Activated T-helper 1 cell treated with anti-CD3 and anti-CD28 coated beads, Interleukin-12 subunit alpha, Interleukin-12 subunit beta, Interleukin-2, Interleukin-4 antibody, amounts not matched to agents 30 ng/mL and 10 ng/mL and 1 ng/mL, durations not matched to agents 14 hours and 24 hours and 36 hours (primary cell): ENCODE measurements at regions of chr10 and their contacts with region 1.

Region 1: DNA sequence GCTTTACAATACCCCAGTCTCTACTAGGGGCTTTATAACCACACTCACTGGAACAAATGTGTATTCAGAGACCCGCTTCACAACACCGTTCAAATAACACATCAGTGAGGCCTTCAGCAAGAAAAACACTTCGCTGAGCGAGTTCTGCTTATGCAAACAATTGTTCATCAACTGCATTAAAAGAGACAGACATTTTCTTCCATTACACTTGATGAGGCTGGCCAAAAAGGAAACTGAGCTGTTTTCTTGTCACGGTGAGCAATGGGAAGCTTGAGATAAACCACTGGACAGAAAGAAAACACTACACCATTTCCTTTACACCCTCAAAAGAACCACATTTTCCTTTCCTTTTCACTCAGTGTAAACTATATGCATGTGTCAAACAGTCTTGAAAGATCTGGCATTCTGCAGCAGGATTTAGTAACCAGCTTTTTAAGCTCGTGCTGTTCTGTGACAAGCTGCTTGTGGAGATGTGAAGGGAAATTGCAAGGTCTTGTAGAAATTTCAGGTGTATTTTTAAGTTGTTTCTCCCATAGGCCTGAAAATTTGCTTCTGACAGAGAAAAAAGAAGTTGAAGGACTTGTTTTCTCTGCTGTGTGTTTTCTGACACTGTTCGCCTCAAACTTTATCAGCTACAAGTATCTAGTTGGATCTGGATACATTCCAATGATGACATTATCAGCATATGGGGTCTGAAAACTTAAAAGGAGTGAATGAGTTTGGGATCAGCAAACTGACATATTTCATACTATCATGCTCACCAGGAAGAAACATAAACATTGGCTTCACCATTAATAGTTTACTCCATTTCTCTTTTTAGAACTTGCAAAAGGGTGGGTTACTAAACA is 693.1 kb downstream of the PARD3 start:
- DNase-seq: peak; percentile 13
- H3K4me3 Mint-ChIP-seq: peak overlapping the region; percentile 17
- H3K27ac Mint-ChIP-seq: peak overlapping the region; percentile 86
- H3K4me1 Mint-ChIP-seq: peaks cover 27% of the 10 kb centered on the region
- H3K27me3 Mint-ChIP-seq: no peaks in the 10 kb centered on the region

Region 2: DNA sequence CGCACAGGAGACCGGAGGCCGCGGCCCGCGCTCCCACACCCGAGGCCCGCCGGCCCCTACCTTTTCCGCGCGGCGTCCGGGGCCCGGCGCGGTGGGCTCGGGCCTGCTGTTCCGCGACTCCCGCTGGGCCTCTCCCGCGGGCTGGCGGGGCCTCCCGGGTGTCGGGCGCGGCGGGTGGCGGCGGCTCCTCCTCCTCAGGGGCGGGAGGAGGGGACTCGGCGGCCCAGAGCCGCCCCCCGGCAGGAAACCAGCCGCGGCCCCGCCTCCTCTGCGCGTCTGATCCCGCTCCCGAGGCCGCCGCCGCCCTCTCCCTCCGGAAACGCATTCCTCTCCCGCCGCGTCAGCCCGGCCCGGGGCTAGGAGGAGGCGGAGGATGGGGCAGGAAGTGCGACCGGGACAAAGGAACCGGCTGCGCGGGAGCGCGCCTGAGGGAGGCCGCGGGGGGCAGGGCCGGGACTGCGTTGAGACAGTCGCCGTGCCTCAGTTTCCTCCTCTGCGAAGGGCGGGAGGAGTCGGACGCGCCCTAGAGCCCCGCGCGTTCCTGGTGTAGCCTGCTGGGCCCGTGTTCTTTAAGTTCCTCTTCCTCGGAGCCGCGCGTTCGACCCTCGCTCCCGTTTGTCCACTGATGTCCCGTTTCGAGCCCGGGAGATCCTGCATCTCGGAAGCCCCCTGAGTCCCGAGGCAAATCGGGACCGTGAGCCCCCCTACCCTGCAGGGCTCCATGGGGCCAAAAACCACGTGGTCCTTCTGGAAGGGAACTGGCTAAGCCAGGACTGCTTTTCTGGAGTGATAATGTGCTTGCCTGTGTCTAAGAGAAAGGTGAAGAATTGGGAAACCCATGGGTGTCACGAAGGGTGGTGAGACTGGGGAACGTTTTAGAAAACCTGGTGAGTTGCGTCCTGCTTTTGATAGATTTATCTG is 1163.7 kb before region 1 on chr10 and contains the start of gene ITGB1:
- intact Hi-C with region 1: loop called (anchors 5 kb)
- DNase-seq: peak; percentile 81
- H3K4me3 Mint-ChIP-seq: peak within 1 kb of the TSS; percentile 86
- H3K27ac Mint-ChIP-seq: peak within 1 kb of the TSS; percentile 93
- H3K4me1 Mint-ChIP-seq: peaks cover 35% of the 10 kb centered on the region
- H3K27me3 Mint-ChIP-seq: peaks cover 12% of the 10 kb centered on the region
- total RNA-seq, gene ITGB1: 51.4 and 61.4 TPM in 2 replicates

Region 3: GRCh38 chr10:33143160-33143728 is 978.8 kb before region 1 on chr10:
- intact Hi-C with region 1: loop called (anchors 1 kb)
- DNase-seq: peak; percentile 31
- H3K4me3 Mint-ChIP-seq: no peak overlapping the region
- H3K27ac Mint-ChIP-seq: peak overlapping the region; percentile 70
- H3K4me1 Mint-ChIP-seq: peaks cover 49% of the 10 kb centered on the region
- H3K27me3 Mint-ChIP-seq: no peaks in the 10 kb centered on the region

Region 4: GRCh38 chr10:33330543-33331378 is 791.2 kb before region 1 on chr10:
- intact Hi-C with region 1: loop called (anchors 5 kb)
- DNase-seq: peak; percentile 53
- H3K4me3 Mint-ChIP-seq: no peak overlapping the region
- H3K27ac Mint-ChIP-seq: no peak overlapping the region
- H3K4me1 Mint-ChIP-seq: peaks cover 22% of the 10 kb centered on the region
- H3K27me3 Mint-ChIP-seq: peaks cover 55% of the 10 kb centered on the region

Region 5: GRCh38 chr10:33706746-33707145 is 415.3 kb before region 1 on chr10:
- intact Hi-C with region 1: no loop called
- DNase-seq: no peak
- H3K4me3 Mint-ChIP-seq: no peak overlapping the region
- H3K27ac Mint-ChIP-seq: no peak overlapping the region
- H3K4me1 Mint-ChIP-seq: no peaks in the 10 kb centered on the region
- H3K27me3 Mint-ChIP-seq: peaks cover 5% of the 10 kb centered on the region

Region 6: DNA sequence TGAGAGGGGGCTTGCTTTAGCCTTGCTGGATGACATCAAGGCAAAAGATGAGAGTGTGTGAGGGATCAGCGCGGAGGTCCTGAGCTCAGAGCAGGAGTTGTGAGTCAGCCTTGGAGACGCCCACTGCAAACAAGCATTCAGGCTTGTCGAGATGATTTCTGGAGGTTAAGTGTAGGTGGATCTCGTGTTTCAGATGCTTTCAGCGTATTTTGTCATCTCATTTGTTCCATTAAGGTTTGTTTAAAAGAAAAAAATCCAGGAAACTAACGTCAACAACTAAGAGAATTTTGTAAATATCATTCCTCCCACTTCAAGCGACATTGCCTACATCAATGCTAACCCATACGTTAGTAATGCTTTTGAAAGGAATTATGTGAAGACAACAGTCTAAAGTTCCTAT is 72.1 kb before region 1 on chr10:
- intact Hi-C with region 1: loop called (anchors 1 kb)
- DNase-seq: no peak
- H3K4me3 Mint-ChIP-seq: no peak overlapping the region
- H3K27ac Mint-ChIP-seq: peak overlapping the region; percentile 40
- H3K4me1 Mint-ChIP-seq: peaks cover 26% of the 10 kb centered on the region
- H3K27me3 Mint-ChIP-seq: no peaks in the 10 kb centered on the region

Region 7: GRCh38 chr10:34092891-34093290 is 29.1 kb before region 1 on chr10:
- intact Hi-C with region 1: no loop called
- DNase-seq: no peak
- H3K4me3 Mint-ChIP-seq: no peak overlapping the region
- H3K27ac Mint-ChIP-seq: no peak overlapping the region
- H3K4me1 Mint-ChIP-seq: no peaks in the 10 kb centered on the region
- H3K27me3 Mint-ChIP-seq: no peaks in the 10 kb centered on the region

Region 8: DNA sequence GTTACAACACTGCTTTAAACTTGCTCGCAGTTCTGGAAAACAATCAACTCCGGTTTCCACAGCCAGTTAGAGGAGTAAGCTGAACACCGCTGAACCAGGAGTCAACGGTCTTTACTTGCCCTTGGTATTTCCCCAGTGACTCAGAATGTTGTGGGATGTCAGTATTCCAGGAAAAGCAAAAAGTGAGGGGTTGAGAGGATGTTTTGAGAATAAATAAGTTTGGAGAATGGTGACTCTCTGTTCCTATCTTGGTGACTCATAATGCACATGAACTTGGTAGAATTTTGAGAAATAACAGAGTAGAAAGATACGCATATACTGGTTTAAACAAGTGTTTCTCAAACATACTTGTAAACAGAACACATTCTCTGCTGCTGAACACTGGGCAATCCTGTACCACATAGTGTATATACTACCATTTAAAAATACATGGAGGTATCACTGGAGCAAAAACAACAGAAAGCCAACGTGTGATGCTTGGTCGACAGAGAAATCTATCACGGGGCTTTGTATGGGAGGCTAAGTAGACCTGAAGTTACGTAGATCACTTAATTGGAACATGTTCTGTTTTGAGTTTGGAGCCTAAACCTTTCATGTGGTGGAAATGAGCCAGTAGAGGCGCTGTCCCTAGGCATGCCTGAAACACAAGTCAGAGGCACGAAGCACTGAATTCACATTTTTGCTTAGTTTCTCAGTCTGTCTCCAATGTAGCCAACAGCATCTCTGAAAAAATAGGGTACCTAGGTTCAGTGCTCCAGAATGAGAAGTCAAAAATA is 158.8 kb after region 1 on chr10:
- intact Hi-C with region 1: loop called (anchors 1 kb)
- DNase-seq: no peak
- H3K4me3 Mint-ChIP-seq: peak overlapping the region; percentile 45
- H3K27ac Mint-ChIP-seq: peak overlapping the region; percentile 76
- H3K4me1 Mint-ChIP-seq: peaks cover 31% of the 10 kb centered on the region
- H3K27me3 Mint-ChIP-seq: no peaks in the 10 kb centered on the region

Region 9: DNA sequence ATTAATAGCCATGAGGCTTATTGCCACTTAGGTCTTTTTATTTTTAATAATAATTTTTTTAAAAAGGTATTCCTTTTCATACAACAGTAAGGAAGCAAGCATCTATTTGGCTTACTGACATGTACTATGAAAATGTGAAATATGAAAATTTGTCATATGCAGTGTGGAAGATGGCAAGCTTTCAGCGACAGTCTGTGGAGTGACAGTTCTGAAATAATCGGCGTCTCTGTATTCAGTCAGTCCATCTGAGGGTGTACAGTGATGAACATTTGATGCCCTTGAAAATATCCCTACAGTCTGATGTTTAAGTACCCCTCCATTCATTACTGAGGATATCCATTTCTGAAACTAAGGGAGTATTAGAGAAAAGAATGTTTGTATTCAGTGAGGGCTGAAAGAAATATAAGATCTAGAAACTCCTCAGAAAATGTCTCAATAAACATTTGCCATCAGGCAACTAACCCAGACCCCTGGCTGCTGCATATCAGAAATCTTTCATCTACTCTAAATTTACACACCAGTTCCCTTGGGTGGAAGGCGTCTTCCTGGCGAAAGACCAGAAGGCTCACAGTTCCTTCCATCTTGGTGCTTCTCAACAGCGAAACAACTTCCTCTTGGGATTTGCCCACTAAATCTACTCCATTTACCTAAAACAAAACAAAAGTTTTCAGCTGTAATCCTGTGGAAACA is 252.5 kb after region 1 on chr10:
- intact Hi-C with region 1: loop called (anchors 10 kb)
- DNase-seq: no peak
- H3K4me3 Mint-ChIP-seq: no peak overlapping the region
- H3K27ac Mint-ChIP-seq: peak overlapping the region; percentile 59
- H3K4me1 Mint-ChIP-seq: peaks cover 11% of the 10 kb centered on the region
- H3K27me3 Mint-ChIP-seq: peaks cover 2% of the 10 kb centered on the region